CD8-positive, alpha-beta memory T cell (primary cell): ENCODE measurements at regions of chr2 and their contacts with region 1.

Region 1: DNA sequence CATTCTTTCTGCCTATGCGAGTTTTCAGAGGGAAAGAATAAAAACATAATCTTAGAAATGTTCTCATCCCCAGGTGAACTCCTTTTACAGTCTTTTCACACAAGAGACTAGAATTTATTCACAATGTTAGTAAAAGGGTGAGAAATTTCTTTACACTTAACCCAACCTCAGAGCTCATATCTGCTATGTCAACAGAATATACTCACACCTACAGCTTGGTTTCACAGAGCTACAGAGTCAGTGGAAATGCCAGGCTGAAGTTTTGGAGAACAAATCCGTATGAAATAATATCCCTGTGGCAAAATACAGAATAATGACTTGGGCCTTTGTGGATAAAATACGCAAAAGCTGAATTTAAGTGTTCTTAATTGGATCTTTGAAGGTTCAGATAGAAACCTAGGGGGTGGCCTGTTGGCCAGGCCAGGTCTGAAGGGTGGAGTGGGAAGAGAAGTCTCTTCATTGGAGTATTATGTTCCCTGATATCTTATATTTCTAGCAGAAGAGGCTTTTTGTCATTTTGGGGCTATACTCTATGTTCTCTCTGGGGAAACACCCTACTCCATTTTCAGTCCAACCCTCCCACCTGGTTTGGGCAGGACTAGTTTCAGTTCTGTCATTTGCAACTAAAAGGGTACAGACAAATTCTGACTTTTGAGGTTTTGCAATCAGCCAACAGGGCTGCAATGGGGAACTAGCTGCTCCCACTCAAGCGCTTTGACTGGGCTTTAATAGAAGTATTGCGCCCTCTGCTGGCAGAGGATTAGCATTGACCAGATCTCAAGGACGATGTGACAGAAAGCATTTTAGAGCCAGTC is 25.7 kb downstream of the FBXO48 start:
- DNase-seq: peak; percentile 71 to 90 (median 81)
- H3K4me3 ChIP-seq: no peak overlapping the region
- H3K4me3 Mint-ChIP-seq: peak overlapping the region; percentile 5 to 82 (median 75)
- H3K27ac ChIP-seq: peak overlapping the region; percentile 41
- H3K27ac Mint-ChIP-seq: peak overlapping the region; percentile 90 to 99 (median 97)
- H3K4me1 ChIP-seq: peaks cover 13% of the 10 kb centered on the region
- H3K4me1 Mint-ChIP-seq: peaks cover 27 to 39% (median 36%) of the 10 kb centered on the region in 3 donors
- H3K27me3 ChIP-seq: no peaks in the 10 kb centered on the region
- H3K27me3 Mint-ChIP-seq: peaks cover 0 to 2% of the 10 kb centered on the region in 2 donors

Region 2: DNA sequence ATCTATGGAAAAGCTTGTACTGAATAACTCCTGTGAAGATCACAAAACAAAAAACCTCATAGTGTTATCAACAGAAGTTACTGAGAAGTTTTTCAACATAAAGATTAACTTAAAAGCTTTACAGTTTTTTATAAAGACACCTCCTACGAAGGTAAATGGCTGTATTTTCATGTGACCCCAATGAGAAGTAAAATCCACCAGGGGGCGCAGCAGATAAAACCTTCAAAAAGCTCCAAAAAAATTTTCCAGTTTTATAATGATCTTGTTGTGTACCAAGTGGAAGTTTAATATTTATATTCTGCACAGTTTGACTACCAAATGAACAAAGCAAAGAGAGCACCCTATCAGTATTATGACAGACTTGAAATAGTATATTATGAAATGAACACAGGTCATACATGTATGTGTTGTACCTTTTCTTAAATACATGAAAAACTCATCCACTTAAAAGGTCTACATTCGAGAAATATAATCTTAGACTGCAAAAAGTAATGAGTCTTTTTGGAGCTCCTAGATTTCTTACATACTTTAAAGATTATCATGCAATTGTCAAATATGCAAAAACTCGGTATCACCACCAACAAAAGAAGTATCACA is 245.2 kb before region 1 on chr2:
- CTCF ChIA-PET with region 1: interaction called, 10 read pairs
- POLR2A ChIA-PET with region 1: no interaction called
- DNase-seq: peak; percentile 25 to 69 (median 44)
- H3K4me3 ChIP-seq: no peak overlapping the region
- H3K4me3 Mint-ChIP-seq: no peak overlapping the region
- H3K27ac ChIP-seq: no peak overlapping the region
- H3K27ac Mint-ChIP-seq: peak overlapping the region in 6 of 8 donors; percentile 12 to 71 (median 36)
- H3K4me1 ChIP-seq: peaks cover 24% of the 10 kb centered on the region
- H3K4me1 Mint-ChIP-seq: peaks cover 47 to 76% (median 71%) of the 10 kb centered on the region in 3 donors
- H3K27me3 ChIP-seq: no peaks in the 10 kb centered on the region
- H3K27me3 Mint-ChIP-seq: no peaks in the 10 kb centered on the region

Region 3: DNA sequence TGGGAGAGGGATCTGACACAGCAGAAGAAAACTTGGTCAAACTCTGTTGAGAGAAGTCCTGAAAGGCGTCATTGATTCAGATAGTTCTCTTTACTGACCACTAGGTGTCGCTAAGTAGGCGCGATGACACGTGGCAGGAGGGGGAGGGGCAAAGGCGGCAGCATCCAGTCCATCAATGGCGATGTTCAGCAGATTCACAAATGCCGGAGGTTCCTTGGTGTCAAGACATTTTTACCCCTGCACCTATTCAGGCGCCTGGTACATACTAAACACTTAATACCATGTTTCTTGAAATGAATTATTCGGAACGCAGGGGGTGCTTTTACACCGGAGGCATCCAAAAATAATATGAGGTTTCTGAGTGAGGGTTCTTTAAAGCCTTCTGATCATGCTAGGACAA is 79.3 kb before region 1 on chr2:
- CTCF ChIA-PET with region 1: interaction called, 23 read pairs
- POLR2A ChIA-PET with region 1: interaction called, 4 read pairs
- DNase-seq: peak; percentile 71 to 87 (median 75)
- H3K4me3 ChIP-seq: peak overlapping the region; percentile 33
- H3K4me3 Mint-ChIP-seq: peak overlapping the region; percentile 67 to 93 (median 80)
- H3K27ac ChIP-seq: no peak overlapping the region
- H3K27ac Mint-ChIP-seq: peak overlapping the region; percentile 74 to 98 (median 90)
- H3K4me1 ChIP-seq: peaks cover 21% of the 10 kb centered on the region
- H3K4me1 Mint-ChIP-seq: peaks cover 35 to 45% (median 36%) of the 10 kb centered on the region in 3 donors
- H3K27me3 ChIP-seq: no peaks in the 10 kb centered on the region
- H3K27me3 Mint-ChIP-seq: no peaks in the 10 kb centered on the region

Region 4: DNA sequence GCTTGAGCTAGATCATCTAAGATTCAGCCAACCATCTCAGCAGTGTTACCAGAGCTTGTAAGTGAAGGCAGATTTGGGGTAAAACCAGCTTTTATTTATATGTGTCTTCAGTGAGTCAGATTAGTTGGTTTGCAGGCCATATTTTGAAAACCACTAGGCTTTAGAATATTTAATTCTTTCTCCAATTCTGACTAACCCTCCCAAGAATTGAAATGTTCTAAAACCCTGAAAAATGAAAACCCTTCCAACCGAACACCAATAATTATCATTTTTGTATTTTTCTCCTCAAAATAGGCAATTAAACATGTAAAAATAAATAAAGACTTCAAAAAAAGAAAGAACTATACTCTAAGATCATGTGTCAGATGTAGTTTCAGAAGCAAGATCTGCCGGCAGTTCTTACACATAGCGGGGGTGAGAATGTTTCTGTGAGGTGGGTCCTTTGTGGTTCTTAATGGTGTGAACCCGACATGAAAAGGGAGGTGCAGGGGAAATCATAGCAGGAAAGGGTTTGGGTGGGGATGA is 62.1 kb before region 1 on chr2:
- CTCF ChIA-PET with region 1: interaction called, 14 read pairs
- POLR2A ChIA-PET with region 1: interaction called, 4 read pairs
- DNase-seq: peak in 4 of 5 donors; percentile 20 to 74 (median 50)
- H3K4me3 ChIP-seq: no peak overlapping the region
- H3K4me3 Mint-ChIP-seq: peak overlapping the region; percentile 19 to 90 (median 74)
- H3K27ac ChIP-seq: no peak overlapping the region
- H3K27ac Mint-ChIP-seq: peak overlapping the region; percentile 79 to 98 (median 95)
- H3K4me1 ChIP-seq: peaks cover 58% of the 10 kb centered on the region
- H3K4me1 Mint-ChIP-seq: peaks cover 75 to 97% (median 96%) of the 10 kb centered on the region in 3 donors
- H3K27me3 ChIP-seq: no peaks in the 10 kb centered on the region
- H3K27me3 Mint-ChIP-seq: no peaks in the 10 kb centered on the region

Region 5: DNA sequence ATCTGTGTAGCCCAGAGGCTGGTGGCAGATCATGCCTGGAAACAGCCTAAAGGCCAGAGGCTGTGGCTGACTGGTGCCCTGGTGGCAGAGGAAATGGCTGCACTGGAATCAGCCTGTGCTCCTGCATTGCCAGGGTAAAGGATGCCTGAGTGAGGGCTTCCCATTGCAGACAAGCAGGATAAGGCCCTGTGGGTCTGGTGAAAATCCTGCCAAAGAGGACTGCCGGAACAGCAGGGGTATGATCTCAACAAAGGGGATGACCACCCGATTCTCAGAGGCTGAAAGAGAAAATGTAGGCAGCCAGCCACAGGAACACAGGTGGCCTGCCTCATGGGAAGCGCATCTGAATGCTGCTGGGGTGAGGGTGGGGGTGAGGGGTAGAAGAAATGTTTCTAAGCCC is 22.5 kb before region 1 on chr2:
- CTCF ChIA-PET with region 1: interaction called, 13 read pairs
- POLR2A ChIA-PET with region 1: no interaction called
- DNase-seq: no peak
- H3K4me3 ChIP-seq: no peak overlapping the region
- H3K4me3 Mint-ChIP-seq: peak overlapping the region in 2 of 7 donors; percentile 38 to 78
- H3K27ac ChIP-seq: peak overlapping the region; percentile 15
- H3K27ac Mint-ChIP-seq: peak overlapping the region in 6 of 8 donors; percentile 7 to 89 (median 76)
- H3K4me1 ChIP-seq: peaks cover 38% of the 10 kb centered on the region
- H3K4me1 Mint-ChIP-seq: peaks cover 42 to 78% (median 65%) of the 10 kb centered on the region in 3 donors
- H3K27me3 ChIP-seq: no peaks in the 10 kb centered on the region
- H3K27me3 Mint-ChIP-seq: no peaks in the 10 kb centered on the region